IMR-90 (cell line): ENCODE measurements at regions of chr5 and their contacts with region 1.

Region 1: DNA sequence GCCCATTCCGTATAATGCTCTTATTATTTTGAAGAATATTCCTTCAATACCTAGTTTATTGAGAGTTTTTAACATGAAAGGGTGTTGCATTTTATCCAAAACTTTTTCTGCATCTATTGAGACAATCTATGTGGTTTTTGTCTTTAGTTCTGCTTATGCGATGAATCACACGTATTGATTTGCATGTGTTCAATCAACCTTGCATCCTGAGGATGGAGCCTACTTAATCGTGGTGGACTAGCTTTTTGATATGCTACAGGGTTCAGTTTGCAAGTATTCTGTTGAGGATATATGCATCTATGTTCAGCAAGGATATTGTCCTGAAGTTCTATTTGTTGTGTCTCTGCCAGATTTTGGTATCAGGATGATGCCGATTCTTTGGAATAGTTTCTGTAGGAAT is 1070.3 kb upstream of the CDH18 start:
- DNase-seq: no peak
- ATAC-seq: no peak
- H3K4me3 ChIP-seq: no peak overlapping the region
- H3K27ac ChIP-seq: no peak overlapping the region
- H3K4me1 ChIP-seq: no peaks in the 10 kb centered on the region
- H3K27me3 ChIP-seq: no peaks in the 10 kb centered on the region
- CTCF ChIP-seq: no peak
- POLR2A ChIP-seq: no peak
- RAD21 ChIP-seq: no peak

Region 2: DNA sequence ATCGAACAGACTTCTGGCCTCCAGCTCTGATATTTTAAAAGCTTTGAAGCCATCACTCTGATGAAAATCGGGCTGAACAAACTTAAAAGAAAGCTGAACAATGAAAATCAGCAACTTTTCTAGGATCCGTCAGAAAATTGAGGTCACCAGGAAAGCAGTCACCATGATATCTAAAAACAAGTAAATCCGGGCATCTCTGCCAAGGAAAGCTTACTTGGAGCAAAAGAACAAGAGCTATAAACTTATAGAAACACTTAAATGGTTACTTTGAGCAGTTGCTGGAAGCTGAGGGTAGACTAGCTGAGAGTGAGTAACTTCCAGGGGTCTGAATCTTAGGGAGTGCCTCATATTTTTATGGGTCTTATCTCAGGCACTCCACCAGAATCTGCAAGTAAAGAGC is 27.3 kb before region 1 on chr5:
- CTCF ChIA-PET with region 1: no interaction called
- POLR2A ChIA-PET with region 1: no interaction called
- dilution Hi-C with region 1: no loop called
- in situ Hi-C with region 1: no loop called
- intact Hi-C with region 1: no loop called
- DNase-seq: no peak
- ATAC-seq: no peak
- H3K4me3 ChIP-seq: no peak overlapping the region
- H3K27ac ChIP-seq: no peak overlapping the region
- H3K4me1 ChIP-seq: no peaks in the 10 kb centered on the region
- H3K27me3 ChIP-seq: no peaks in the 10 kb centered on the region
- CTCF ChIP-seq: no peak
- POLR2A ChIP-seq: no peak
- RAD21 ChIP-seq: no peak

Region 3: GRCh38 chr5:21071986-21072385 is 13.7 kb after region 1 on chr5:
- CTCF ChIA-PET with region 1: no interaction called
- POLR2A ChIA-PET with region 1: no interaction called
- dilution Hi-C with region 1: no loop called
- in situ Hi-C with region 1: no loop called
- intact Hi-C with region 1: loop called (anchors 1 kb)
- DNase-seq: no peak
- ATAC-seq: no peak
- H3K4me3 ChIP-seq: no peak overlapping the region
- H3K27ac ChIP-seq: no peak overlapping the region
- H3K4me1 ChIP-seq: no peaks in the 10 kb centered on the region
- H3K27me3 ChIP-seq: no peaks in the 10 kb centered on the region
- CTCF ChIP-seq: no peak
- POLR2A ChIP-seq: no peak
- RAD21 ChIP-seq: no peak